T-cell (primary cell): ENCODE measurements at regions of chr15 and their contacts with region 1.

Region 1: DNA sequence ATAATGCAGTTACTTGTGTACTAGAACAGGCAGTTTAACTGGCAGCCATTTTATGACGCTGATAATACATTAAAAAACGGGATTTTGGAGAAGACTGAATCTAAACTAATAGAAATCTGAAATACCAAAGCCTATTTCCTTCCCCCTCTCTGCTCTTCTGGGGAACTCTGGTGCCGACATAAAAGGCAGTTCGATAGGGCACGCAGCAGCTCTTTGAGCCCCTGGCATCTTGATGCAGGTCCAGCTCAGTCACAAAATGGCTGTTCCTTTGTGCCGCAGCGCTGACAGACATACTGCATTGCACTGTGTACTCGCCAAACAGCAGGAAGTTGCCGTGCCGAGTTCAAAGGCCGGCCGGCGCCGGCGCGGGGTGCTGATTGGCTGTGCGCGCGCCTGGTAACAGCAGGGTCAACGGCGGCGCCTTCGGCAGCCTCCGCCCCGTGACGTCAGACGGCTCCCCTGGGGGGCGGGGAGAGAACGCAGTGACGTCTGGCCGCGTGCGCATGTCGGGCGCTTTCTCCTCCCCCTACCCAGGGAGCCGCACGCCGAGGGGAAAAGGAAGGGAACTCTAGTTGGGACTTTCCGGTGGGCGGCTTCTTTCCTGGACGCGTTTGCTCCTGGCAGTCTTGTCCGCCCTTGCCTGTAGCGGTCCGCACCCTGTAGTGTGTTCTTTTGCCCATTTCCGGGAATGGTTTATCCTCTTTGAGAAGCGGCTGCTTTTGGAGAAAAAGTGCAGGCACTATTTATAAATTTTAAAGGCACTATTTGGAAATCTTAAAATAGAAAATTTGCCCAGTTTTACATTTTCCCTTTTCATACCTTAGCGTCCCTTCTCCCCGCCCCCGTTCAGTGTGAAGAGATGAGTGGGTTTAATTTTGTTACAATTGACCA is 4.1 kb downstream of the CHD2 start:
- DNase-seq: peak; percentile 96 to 100 (median 99)
- ATAC-seq: peak; percentile 84 to 89 (median 87)
- H3K4me3 ChIP-seq: peak overlapping the region; percentile 87 to 88
- H3K4me3 Mint-ChIP-seq: peak overlapping the region; percentile 93 to 99 (median 99)
- H3K27ac ChIP-seq: peak overlapping the region; percentile 96
- H3K27ac Mint-ChIP-seq: peak overlapping the region; percentile 100
- H3K4me1 ChIP-seq: peaks cover 22 to 59% of the 10 kb centered on the region in 2 experiments
- H3K4me1 Mint-ChIP-seq: peaks cover 62 to 82% (median 68%) of the 10 kb centered on the region in 3 donors
- H3K27me3 ChIP-seq: no peaks in the 10 kb centered on the region
- H3K27me3 Mint-ChIP-seq: no peaks in the 10 kb centered on the region

Region 2: GRCh38 chr15:92917606-92918407 is 13.6 kb after region 1 on chr15:
- CTCF ChIA-PET with region 1: interaction called in 1 of 2 experiments, 29 read pairs
- POLR2A ChIA-PET with region 1: interaction called, 10 to 88 read pairs
- DNase-seq: peak; percentile 77 to 97 (median 89)
- ATAC-seq: peak; percentile 32 to 41 (median 36)
- H3K4me3 ChIP-seq: no peak overlapping the region
- H3K4me3 Mint-ChIP-seq: peak overlapping the region; percentile 7 to 74 (median 29)
- H3K27ac ChIP-seq: peak overlapping the region; percentile 93
- H3K27ac Mint-ChIP-seq: peak overlapping the region; percentile 95 to 96
- H3K4me1 ChIP-seq: peaks cover 69 to 75% of the 10 kb centered on the region in 2 experiments
- H3K4me1 Mint-ChIP-seq: peaks cover 86 to 89% (median 89%) of the 10 kb centered on the region in 3 donors
- H3K27me3 ChIP-seq: no peaks in the 10 kb centered on the region
- H3K27me3 Mint-ChIP-seq: no peaks in the 10 kb centered on the region

Region 3: GRCh38 chr15:93250950-93251349 is 346.8 kb after region 1 on chr15:
- CTCF ChIA-PET with region 1: no interaction called
- POLR2A ChIA-PET with region 1: no interaction called
- DNase-seq: no peak
- ATAC-seq: no peak
- H3K4me3 ChIP-seq: no peak overlapping the region
- H3K4me3 Mint-ChIP-seq: no peak overlapping the region
- H3K27ac ChIP-seq: no peak overlapping the region
- H3K27ac Mint-ChIP-seq: no peak overlapping the region
- H3K4me1 ChIP-seq: no peaks in the 10 kb centered on the region
- H3K4me1 Mint-ChIP-seq: peaks cover 0 to 12% (median 0%) of the 10 kb centered on the region in 3 donors
- H3K27me3 ChIP-seq: peaks cover 0 to 20% of the 10 kb centered on the region in 2 experiments
- H3K27me3 Mint-ChIP-seq: peaks cover 0 to 11% of the 10 kb centered on the region in 2 donors